Colonic mucosa (tissue), 4 donors: ENCODE measurements at regions of chr6 and their contacts with region 1.

Region 1: DNA sequence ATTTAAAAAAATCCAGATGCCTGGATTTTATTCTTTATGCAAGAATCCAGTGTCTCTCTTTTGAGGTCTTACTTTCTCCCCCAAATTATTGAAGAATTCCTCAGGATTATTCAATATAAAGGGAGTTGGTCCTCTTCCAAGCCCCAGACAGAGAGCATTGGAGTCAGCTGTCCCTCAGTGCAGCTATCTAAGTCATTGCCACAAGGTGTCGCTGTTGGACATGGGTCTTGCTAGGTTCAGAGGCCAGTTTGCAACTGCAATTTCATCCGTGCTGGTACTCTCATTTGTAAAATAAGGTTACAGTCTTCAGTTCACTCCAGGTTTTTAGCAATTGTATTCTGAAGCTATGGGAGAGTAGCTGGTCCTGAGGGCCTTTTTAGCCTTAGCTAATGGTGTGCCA is 27.8 kb downstream of the CCN2 start:
- DNase-seq: peak; percentile 72
- H3K4me3 ChIP-seq: no peak overlapping the region
- H3K27ac ChIP-seq: no peak overlapping the region
- H3K4me1 ChIP-seq: no peaks in the 10 kb centered on the region
- H3K27me3 ChIP-seq: no peaks in the 10 kb centered on the region
- CTCF ChIP-seq: peak; percentile 71

Region 2: DNA sequence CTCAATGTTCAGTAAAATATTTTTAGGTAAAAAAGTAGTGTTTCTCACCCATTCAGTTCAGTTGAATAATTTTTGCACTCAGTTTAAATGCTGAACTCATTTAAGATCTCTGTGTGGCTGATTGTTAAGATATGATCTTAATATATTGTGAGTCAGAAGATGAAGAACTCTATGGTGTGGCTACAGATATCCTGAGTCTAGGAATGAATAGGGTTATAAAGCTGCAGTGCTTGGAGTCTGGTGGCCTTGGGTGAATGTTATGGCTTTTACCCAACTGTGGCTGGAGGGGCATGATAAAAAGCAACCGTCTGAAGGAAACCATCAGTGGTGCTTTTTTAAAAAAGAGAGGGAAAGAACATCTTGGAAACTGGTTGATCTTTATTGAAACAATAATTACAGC is 38.1 kb before region 1 on chr6:
- intact Hi-C with region 1: no loop called
- DNase-seq: no peak
- H3K4me3 ChIP-seq: no peak overlapping the region
- H3K27ac ChIP-seq: no peak overlapping the region
- H3K4me1 ChIP-seq: no peaks in the 10 kb centered on the region
- H3K27me3 ChIP-seq: no peaks in the 10 kb centered on the region
- CTCF ChIP-seq: no peak

Region 3: DNA sequence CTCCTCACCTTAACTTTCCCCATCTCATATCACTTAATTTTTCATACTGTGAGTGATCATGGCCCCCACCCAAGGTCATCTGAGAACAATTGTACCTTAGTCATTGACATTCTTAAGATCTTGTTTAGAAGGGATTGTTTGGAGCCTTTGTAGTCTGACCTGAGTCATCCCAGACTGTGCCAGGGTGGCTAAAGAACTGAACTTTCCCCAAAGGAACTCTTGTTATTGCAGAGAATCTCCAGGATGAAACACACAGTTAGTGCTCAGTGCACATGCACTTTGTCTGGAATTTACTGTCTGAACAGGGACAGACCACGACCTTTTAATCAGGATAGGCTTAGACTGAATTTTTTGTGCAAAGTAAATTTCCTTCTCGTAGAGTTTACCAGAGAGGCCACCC is 140.4 kb after region 1 on chr6:
- intact Hi-C with region 1: no loop called
- DNase-seq: no peak
- H3K4me3 ChIP-seq: no peak overlapping the region
- H3K27ac ChIP-seq: no peak overlapping the region
- H3K4me1 ChIP-seq: no peaks in the 10 kb centered on the region
- H3K27me3 ChIP-seq: no peaks in the 10 kb centered on the region
- CTCF ChIP-seq: no peak

Region 4: DNA sequence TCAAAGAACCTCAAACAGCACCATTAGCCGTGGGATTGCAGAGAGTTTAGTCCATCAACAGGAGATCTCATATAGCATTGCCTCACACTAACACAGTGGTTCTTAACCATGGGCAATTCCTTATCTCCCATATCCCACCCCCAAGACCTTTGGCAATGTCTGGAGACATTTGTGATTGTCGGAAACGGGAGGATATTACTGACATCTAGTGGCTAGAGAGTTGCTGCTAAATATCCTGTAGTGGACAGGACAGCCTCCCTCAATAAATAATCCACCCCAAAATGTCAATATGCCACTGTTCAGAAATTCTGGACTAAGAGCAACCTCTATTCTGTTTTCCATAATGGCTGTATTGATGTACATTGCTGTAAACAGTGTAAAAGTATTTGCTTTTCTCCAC is 237.9 kb after region 1 on chr6:
- intact Hi-C with region 1: loop called (anchors 10 kb)
- DNase-seq: no peak
- H3K4me3 ChIP-seq: no peak overlapping the region
- H3K27ac ChIP-seq: no peak overlapping the region
- H3K4me1 ChIP-seq: no peaks in the 10 kb centered on the region
- H3K27me3 ChIP-seq: no peaks in the 10 kb centered on the region
- CTCF ChIP-seq: peak; percentile 49

Region 5: GRCh38 chr6:132218059-132218696 is 294.8 kb after region 1 on chr6:
- intact Hi-C with region 1: loop called (anchors 2 kb)
- DNase-seq: no peak
- H3K4me3 ChIP-seq: no peak overlapping the region
- H3K27ac ChIP-seq: no peak overlapping the region
- H3K4me1 ChIP-seq: no peaks in the 10 kb centered on the region
- H3K27me3 ChIP-seq: no peaks in the 10 kb centered on the region
- CTCF ChIP-seq: peak; percentile 33

Region 6: GRCh38 chr6:132530293-132530974 is 607.1 kb after region 1 on chr6:
- intact Hi-C with region 1: no loop called
- DNase-seq: peak; percentile 74
- H3K4me3 ChIP-seq: no peak overlapping the region
- H3K27ac ChIP-seq: no peak overlapping the region
- H3K4me1 ChIP-seq: no peaks in the 10 kb centered on the region
- H3K27me3 ChIP-seq: no peaks in the 10 kb centered on the region
- CTCF ChIP-seq: peak; percentile 89